BJ (cell line): ENCODE measurements at regions of chr5 and their contacts with region 1.

Region 1: GRCh38 chr5:88690409-88691229 is 192.4 kb downstream of the MEF2C start:
- DNase-seq: no peak
- H3K4me3 ChIP-seq: no peak overlapping the region
- H3K27me3 ChIP-seq: peaks cover 65% of the 10 kb centered on the region
- CTCF ChIP-seq: peak; percentile 98

Region 2: DNA sequence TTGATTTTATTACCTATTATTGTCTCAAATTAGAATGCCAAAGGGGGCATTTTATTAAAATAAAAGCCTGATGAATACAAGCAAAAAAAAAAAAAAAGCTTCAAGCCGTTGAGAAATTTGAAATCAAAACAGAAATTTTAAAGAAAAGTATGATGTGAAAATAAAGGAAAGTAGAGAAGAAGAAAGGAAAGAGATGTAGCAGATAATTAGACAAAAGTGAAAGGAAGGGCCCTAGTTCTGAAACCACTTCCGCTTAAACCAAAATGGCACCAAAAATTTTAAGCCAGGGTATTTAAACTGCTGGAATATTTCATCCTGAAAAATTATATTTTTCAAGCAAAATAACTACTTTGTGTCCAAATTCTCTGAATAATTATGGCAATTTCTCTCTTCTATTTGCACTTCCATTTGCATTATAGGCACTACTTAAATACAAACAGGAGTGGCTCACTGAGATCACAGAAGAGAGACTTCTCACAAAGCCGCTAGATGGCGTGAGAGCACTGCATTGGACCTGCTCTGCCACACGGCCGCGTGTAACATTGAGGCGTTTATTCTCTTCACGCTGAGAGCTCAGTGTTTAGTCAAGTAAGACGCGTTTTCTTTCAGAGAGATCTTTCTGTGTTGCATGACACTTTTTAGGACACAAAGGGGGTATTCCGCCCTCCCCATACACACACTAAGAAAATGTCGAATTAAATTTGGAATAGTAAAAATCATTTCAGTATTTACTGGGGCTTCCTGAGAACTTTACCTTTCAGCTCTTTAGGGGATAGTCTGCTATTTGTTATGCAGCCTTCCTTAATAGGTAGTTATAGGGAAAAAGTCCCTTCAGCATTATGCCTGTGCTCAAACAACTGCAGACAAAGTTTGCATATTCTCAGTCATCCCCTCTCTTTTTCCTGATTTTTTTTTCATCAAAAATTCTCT is 909.5 kb before region 1 on chr5:
- CTCF ChIA-PET with region 1: interaction called, 61 read pairs
- POLR2A ChIA-PET with region 1: no interaction called
- DNase-seq: peak; percentile 2
- H3K4me3 ChIP-seq: no peak overlapping the region
- H3K27me3 ChIP-seq: no peaks in the 10 kb centered on the region
- CTCF ChIP-seq: peak; percentile 95

Region 3: GRCh38 chr5:88680253-88681132 is 10.1 kb before region 1 on chr5:
- CTCF ChIA-PET with region 1: interaction called, 42 read pairs
- POLR2A ChIA-PET with region 1: no interaction called
- DNase-seq: no peak
- H3K4me3 ChIP-seq: peak overlapping the region; percentile 18; the same call in 1 of the 2 replicates
- H3K27me3 ChIP-seq: peaks cover 51% of the 10 kb centered on the region
- CTCF ChIP-seq: peak; percentile 83

Region 4: GRCh38 chr5:88702328-88702727 is 11.7 kb after region 1 on chr5:
- CTCF ChIA-PET with region 1: interaction called, 11 read pairs
- POLR2A ChIA-PET with region 1: no interaction called
- DNase-seq: no peak
- H3K4me3 ChIP-seq: no peak overlapping the region
- H3K27me3 ChIP-seq: no peaks in the 10 kb centered on the region; the same call in 1 of the 2 replicates
- CTCF ChIP-seq: no peak

Region 5: GRCh38 chr5:88707216-88707965 is 16.8 kb after region 1 on chr5:
- CTCF ChIA-PET with region 1: interaction called, 11 read pairs
- POLR2A ChIA-PET with region 1: no interaction called
- DNase-seq: no peak
- H3K4me3 ChIP-seq: no peak overlapping the region
- H3K27me3 ChIP-seq: no peaks in the 10 kb centered on the region; the same call in 1 of the 2 replicates
- CTCF ChIP-seq: no peak

Region 6: DNA sequence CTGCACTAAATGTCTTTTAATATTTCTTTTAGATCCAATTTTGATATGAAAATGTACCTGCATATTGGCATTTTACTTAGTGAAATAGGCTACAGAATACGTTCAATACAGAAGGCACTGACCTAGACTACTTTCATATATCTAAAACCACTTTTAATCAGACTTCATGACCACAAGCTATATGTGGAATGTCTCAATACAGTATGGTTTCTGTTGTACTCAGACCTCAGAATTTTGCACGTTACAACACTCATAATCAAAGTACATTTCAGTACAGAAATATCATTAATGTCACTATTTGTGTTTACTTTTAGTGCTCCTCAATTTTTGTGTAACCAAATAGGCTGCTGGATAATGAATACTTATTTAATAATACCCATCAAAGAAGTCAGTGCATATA is 117.5 kb after region 1 on chr5:
- CTCF ChIA-PET with region 1: no interaction called
- POLR2A ChIA-PET with region 1: no interaction called
- DNase-seq: no peak
- H3K4me3 ChIP-seq: no peak overlapping the region
- H3K27me3 ChIP-seq: no peaks in the 10 kb centered on the region
- CTCF ChIP-seq: no peak